K562 (cell line): ENCODE measurements at regions of chr6 and their contacts with region 1.

Region 1: GRCh38 chr6:7341989-7342742 is 29.2 kb upstream of the SSR1 start:
- DNase-seq: peak in 3 of 4 experiments; percentile 24 to 28 (median 27)
- ATAC-seq: no peak; the same call in 2 of the 3 replicates
- H3K4me3 ChIP-seq: no peak overlapping the region
- H3K27ac ChIP-seq: no peak overlapping the region
- H3K4me1 ChIP-seq: peaks cover 3 to 8% of the 10 kb centered on the region in 2 experiments; a peak in 4 of 5 replicates
- H3K27me3 ChIP-seq: no peaks in the 10 kb centered on the region
- CTCF ChIP-seq: no peak
- EP300 ChIP-seq: no peak
- POLR2A ChIP-seq: no peak
- RAD21 ChIP-seq: no peak

Region 2: DNA sequence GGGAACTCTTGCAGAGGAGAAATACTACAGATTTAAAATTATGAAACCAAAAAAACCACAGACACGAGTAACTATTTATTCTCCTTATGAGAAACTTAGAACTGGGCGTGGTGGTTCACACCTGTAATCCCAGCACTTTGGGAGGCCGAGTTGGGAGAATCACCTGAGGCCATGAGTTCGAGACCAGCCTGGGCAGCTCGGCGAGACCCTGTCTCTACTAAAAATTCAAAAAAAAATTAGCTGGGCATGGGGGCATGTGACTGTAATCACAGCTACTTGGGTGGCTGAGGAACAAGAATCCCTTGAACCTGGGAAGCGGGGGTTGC is 66.0 kb before region 1 on chr6:
- CTCF ChIA-PET with region 1: no interaction called
- POLR2A ChIA-PET with region 1: no interaction called
- in situ Hi-C with region 1: loop called (anchors 5 kb)
- intact Hi-C with region 1: loop called (anchors 1 kb)
- DNase-seq: no peak
- ATAC-seq: no peak
- H3K4me3 ChIP-seq: no peak overlapping the region
- H3K27ac ChIP-seq: no peak overlapping the region
- H3K4me1 ChIP-seq: peaks cover 0 to 7% of the 10 kb centered on the region in 2 experiments; a peak in 1 of 5 replicates
- H3K27me3 ChIP-seq: peaks cover 8 to 13% of the 10 kb centered on the region in 2 experiments; a peak in 4 of 5 replicates
- CTCF ChIP-seq: no peak
- EP300 ChIP-seq: no peak
- POLR2A ChIP-seq: no peak
- RAD21 ChIP-seq: no peak

Region 3: GRCh38 chr6:7282097-7282906 is 59.9 kb before region 1 on chr6:
- CTCF ChIA-PET with region 1: no interaction called
- POLR2A ChIA-PET with region 1: no interaction called
- in situ Hi-C with region 1: loop called (anchors 5 kb)
- intact Hi-C with region 1: no loop called
- DNase-seq: no peak
- ATAC-seq: peak; percentile 30; the same call in 1 of the 3 replicates
- H3K4me3 ChIP-seq: no peak overlapping the region
- H3K27ac ChIP-seq: no peak overlapping the region
- H3K4me1 ChIP-seq: no peaks in the 10 kb centered on the region
- H3K27me3 ChIP-seq: no peaks in the 10 kb centered on the region
- CTCF ChIP-seq: no peak
- EP300 ChIP-seq: no peak
- POLR2A ChIP-seq: peak; percentile 39; the same call in 1 of the 2 replicates
- RAD21 ChIP-seq: no peak